ENCODE measurements at regions of chr2 and their contacts with region 1.

Region 1: GRCh38 chr2:181218401-181218821 is 238.0 kb downstream of the UBE2E3 start:
- DNase-seq: no peak

Region 2: GRCh38 chr2:180656455-180656847 is 562.0 kb before region 1 on chr2:
- intact Hi-C with region 1: loop called in 1 of 2 experiments (anchors 5 kb)
- DNase-seq: no peak

Region 3: GRCh38 chr2:181036848-181037603 is 181.4 kb before region 1 on chr2:
- intact Hi-C with region 1: no loop called
- DNase-seq: no peak

Region 4: DNA sequence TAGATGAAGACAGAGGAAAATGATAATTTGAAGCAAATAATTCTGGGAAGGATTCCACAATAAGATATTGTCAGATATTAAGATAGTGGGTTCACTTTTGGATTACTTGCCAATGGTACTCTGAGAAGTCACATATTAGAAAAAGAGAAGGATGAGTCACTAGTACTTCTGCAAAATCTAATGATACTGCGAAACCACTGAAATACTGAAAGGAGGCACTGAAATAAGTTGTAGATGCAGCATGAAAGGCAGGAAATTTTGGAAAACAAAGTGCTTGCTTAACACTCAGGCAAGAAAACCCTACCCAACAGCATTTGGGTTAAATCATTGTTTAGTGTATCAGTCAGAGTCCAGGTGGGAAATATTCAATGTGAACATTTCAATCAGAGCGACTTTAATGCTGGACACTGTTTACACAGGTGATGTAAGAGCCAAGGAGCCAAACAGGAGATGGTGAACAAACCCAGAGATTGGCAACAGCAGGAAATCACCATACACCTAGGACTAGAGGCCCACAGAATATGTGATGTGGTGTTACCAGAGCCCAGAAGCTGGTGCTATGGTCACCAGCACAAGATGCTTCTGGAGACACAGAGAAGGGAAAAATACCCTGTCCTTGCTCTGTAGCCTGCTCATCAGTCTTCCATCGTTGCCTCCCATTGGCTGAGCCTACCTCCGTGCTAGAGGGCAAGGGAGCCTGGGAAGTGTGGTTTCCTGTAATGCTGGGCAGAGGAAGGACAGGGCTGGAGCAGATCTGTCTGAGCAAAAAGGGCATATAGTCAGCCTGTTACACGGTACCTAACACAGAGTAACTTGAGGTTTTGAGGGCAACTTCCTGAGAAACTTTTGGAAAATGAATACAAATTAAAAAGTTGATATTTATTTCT is 34.1 kb after region 1 on chr2:
- intact Hi-C with region 1: no loop called
- DNase-seq: no peak

Region 5: GRCh38 chr2:181586569-181587081 is 368.2 kb after region 1 on chr2:
- intact Hi-C with region 1: no loop called
- DNase-seq: no peak

Measured in posterior vena cava (tissue), 2 donors.